MCF 10A (cell line): ENCODE measurements at regions of chr1 and their contacts with region 1.

Region 1: GRCh38 chr1:199791495-199791894 is 236.0 kb upstream of the NR5A2 start:
- DNase-seq: no peak
- H3K4me3 Mint-ChIP-seq: no peak overlapping the region
- H3K27ac Mint-ChIP-seq: no peak overlapping the region
- H3K4me1 Mint-ChIP-seq: peaks cover 22% of the 10 kb centered on the region
- H3K27me3 Mint-ChIP-seq: no peaks in the 10 kb centered on the region
- CTCF ChIP-seq: no peak

Region 2: GRCh38 chr1:199780948-199781347 is 10.5 kb before region 1 on chr1:
- CTCF ChIA-PET with region 1: interaction called, 4 read pairs
- POLR2A ChIA-PET with region 1: interaction called, 10 read pairs
- intact Hi-C with region 1: no loop called
- DNase-seq: peak; percentile 47
- H3K4me3 Mint-ChIP-seq: no peak overlapping the region
- H3K27ac Mint-ChIP-seq: peak overlapping the region; percentile 86
- H3K4me1 Mint-ChIP-seq: peaks cover 35% of the 10 kb centered on the region
- H3K27me3 Mint-ChIP-seq: no peaks in the 10 kb centered on the region
- CTCF ChIP-seq: no peak

Region 3: GRCh38 chr1:199821026-199821779 is 29.7 kb after region 1 on chr1:
- CTCF ChIA-PET with region 1: no interaction called
- POLR2A ChIA-PET with region 1: no interaction called
- intact Hi-C with region 1: no loop called
- DNase-seq: no peak
- H3K4me3 Mint-ChIP-seq: no peak overlapping the region
- H3K27ac Mint-ChIP-seq: no peak overlapping the region
- H3K4me1 Mint-ChIP-seq: no peaks in the 10 kb centered on the region
- H3K27me3 Mint-ChIP-seq: no peaks in the 10 kb centered on the region
- CTCF ChIP-seq: no peak

Region 4: DNA sequence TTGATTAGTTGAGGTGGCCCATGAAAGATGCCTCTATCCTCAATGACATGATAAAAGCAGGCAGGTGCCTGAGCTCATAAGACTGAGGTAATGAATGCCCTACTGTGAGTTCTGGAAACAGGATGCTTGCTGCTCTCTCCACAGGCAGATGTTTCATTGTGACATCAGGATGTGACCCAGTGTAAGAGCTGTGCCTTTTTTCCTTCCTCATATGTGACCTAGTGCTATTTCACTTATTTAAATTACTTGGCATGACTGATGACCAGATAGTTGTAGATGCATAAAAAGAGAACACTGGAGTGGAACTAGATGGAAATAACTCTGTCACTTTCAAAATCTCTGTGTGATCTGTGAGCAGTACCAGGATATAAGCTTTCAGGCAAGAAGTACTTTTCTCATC is 797.2 kb after region 1 on chr1:
- CTCF ChIA-PET with region 1: no interaction called
- POLR2A ChIA-PET with region 1: no interaction called
- intact Hi-C with region 1: no loop called
- DNase-seq: no peak
- H3K4me3 Mint-ChIP-seq: no peak overlapping the region
- H3K27ac Mint-ChIP-seq: no peak overlapping the region
- H3K4me1 Mint-ChIP-seq: no peaks in the 10 kb centered on the region
- H3K27me3 Mint-ChIP-seq: no peaks in the 10 kb centered on the region
- CTCF ChIP-seq: no peak